ENCODE measurements at regions of chr12 and their contacts with region 1.

Region 1: DNA sequence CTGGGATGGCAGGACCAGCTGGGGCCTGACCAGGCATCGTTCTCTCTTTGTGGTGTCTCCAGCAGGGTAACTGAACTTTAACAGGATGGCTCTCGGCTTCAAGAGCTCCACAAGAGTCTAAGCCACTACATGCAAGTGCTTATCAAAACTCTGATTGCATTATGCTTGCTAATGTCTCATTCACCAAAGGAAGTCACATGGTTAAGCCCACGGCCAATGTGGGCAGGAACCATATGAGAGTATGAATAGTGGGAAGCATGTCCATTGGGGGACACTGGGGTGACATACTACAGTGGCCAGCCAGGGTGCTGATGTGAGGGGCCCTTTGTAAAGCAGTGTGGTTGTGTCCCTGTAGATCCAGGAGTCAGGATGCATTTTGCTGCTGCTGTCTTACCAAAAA is 35.0 kb upstream of the KCNA5 start:
- DNase-seq: no peak
- CTCF ChIP-seq: no peak

Region 2: DNA sequence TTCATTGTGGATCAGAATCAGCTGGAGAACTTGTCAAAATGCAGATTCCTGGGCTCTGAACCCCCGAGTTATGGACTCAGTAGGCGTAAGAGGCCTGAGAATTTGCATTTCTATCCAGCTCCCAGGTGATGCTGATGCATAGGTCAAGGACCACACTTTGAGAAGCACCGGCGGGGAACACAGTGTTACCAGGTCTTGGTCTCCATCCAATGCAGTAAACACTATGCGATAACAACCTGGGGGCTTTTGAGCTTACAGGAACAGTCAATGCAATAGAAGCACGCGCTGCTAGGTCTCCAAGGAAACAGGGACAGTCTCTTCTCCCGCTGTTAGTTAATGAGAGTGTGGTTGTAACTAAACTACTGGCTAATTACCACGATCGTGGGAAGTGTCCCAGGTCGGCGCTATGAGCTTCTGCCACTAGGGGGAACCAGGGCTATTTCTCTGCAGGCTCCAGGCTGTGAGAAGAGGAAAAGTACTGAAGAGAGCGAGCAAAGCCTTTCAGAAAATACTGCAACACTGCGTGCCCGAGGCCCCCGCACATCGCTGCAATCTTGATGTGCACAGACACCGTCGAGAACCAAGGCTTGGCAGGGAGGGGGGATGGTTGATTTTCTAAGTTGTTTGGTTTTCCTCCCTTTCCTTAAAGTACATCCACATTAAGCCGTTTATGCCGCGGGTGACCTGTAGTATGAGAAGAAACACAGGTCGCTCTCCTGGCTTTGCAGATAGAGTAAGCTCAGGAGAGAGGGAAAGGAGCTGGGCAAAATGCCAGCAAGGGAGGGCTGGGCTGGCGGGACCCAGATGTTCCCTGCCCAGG is 151.0 kb before region 1 on chr12:
- in situ Hi-C with region 1: loop called (anchors 5 kb)
- DNase-seq: peak; percentile 82
- CTCF ChIP-seq: peak; percentile 83

Region 3: DNA sequence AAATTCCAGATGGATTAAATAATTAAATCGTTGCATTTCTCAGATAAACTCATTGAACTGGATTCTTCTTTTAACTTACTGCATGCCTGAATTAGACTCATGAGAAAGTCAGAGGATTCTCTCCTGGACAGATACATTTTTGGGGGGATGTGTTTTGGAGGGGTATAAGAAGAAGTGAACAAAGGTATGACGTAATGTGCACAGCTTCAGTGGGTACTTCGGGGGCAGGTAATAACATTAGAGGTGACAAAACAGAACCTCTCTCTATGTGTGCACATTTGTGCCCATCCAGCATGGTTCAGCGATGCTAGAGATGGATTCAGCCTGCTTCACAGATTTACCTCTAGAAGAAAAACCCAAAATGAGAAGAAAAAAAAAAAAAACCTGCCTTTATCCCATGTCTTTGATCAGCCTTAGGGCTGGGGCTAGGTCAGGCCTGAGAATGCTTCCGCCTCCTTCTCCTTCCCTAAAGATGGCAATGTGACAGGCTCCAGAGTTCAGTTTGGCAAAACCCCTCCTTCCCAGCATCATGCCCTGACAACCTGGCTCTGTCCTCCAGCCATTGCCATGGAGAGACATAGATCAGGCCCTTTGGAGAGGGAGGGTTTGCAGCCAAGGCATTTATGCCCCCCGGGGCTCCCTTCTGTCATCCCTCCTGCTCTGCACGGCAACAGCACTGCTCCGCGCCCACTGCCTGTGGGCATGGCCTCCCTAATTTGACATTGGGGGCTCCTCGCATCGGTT is 201.7 kb after region 1 on chr12:
- in situ Hi-C with region 1: no loop called
- DNase-seq: no peak
- CTCF ChIP-seq: no peak

Measured in GM13976 (cell line).